Activated naive CD4-positive, alpha-beta T cell treated with anti-CD3 and anti-CD28 coated beads, Interleukin-2, amount 10 ng/mL, durations not matched to agents 7 days and 5 days (primary cell): ENCODE measurements at regions of chr3 and their contacts with region 1.

Region 1: GRCh38 chr3:194472290-194472920 is 14.4 kb downstream of the ATP13A3 start:
- DNase-seq: peak; percentile 34
- H3K4me3 Mint-ChIP-seq: no peak overlapping the region
- H3K27ac Mint-ChIP-seq: no peak overlapping the region
- H3K4me1 Mint-ChIP-seq: peaks cover 6% of the 10 kb centered on the region
- H3K27me3 Mint-ChIP-seq: no peaks in the 10 kb centered on the region

Region 2: DNA sequence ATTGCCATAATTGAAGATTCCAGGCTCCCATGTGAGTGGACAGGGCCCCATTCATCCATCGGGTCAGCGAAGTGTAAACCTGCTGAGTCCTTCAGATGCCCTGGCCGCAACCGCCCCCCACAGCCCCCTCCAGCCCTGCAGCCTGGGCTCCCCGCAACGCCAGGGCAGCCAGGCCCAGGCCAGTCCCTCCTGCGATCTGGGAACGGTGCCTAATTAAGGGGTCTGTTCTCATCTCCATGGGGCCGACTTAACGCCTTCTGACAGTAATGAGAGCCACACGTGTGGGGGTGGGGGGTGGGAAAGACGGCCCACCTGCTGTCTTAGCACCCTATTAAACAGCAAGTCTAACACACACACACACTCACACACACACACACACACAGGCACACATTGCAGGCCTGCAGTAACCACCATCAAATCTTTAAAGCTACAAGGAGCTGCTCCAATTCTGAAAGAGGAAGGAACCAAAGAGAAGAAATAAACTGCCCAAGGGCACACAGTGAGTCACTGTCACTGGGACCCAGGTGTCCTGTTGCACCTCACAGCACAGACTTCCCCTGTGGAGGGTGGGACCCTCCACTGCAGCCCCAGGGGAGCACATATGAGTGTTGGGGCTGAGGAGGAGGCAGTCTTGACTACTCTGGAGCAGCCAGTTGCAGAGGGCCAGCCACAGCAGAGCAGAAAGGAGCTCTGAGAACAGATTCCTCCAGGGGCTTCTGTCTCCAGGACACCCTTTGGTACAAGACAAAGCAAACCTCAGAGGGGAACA is 368.2 kb before region 1 on chr3:
- CTCF ChIA-PET with region 1: no interaction called
- DNase-seq: no peak
- H3K4me3 Mint-ChIP-seq: no peak overlapping the region
- H3K27ac Mint-ChIP-seq: no peak overlapping the region
- H3K4me1 Mint-ChIP-seq: peaks cover 23% of the 10 kb centered on the region
- H3K27me3 Mint-ChIP-seq: peaks cover 72% of the 10 kb centered on the region

Region 3: GRCh38 chr3:194573691-194574437 is 101.5 kb after region 1 on chr3:
- CTCF ChIA-PET with region 1: interaction called, 35 read pairs
- DNase-seq: peak; percentile 57
- H3K4me3 Mint-ChIP-seq: no peak overlapping the region
- H3K27ac Mint-ChIP-seq: no peak overlapping the region
- H3K4me1 Mint-ChIP-seq: no peaks in the 10 kb centered on the region
- H3K27me3 Mint-ChIP-seq: peaks cover 61% of the 10 kb centered on the region

Region 4: GRCh38 chr3:194592798-194593752 is 120.7 kb after region 1 on chr3:
- CTCF ChIA-PET with region 1: interaction called, 28 read pairs
- DNase-seq: no peak
- H3K4me3 Mint-ChIP-seq: no peak overlapping the region
- H3K27ac Mint-ChIP-seq: no peak overlapping the region
- H3K4me1 Mint-ChIP-seq: peaks cover 3% of the 10 kb centered on the region
- H3K27me3 Mint-ChIP-seq: peaks cover 5% of the 10 kb centered on the region